MCF 10A (cell line): ENCODE measurements at regions of chr2 and their contacts with region 1.

Region 1: DNA sequence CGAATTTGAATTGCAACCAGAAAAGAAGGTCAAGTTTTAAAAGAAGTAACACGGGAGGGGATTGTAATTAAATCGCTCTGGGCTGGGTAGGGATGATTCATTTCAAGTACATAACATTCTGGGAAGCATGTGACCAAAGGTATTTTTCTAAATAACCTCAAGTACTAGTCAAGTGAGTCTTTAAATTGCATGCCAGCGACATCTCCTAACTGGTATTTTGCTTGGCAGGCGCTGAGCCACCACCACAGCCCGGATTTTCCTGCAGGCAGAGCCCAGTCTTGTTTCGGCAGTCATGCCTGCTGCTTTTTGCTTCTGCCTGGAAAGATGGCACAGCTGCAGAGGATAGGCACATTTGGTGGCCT is 33.7 kb upstream of the NPAS2 start:
- DNase-seq: peak; percentile 91
- H3K4me3 Mint-ChIP-seq: peak overlapping the region; percentile 56
- H3K27ac Mint-ChIP-seq: peak overlapping the region; percentile 21
- H3K4me1 Mint-ChIP-seq: peaks cover 29% of the 10 kb centered on the region
- H3K27me3 Mint-ChIP-seq: no peaks in the 10 kb centered on the region
- CTCF ChIP-seq: no peak

Region 2: DNA sequence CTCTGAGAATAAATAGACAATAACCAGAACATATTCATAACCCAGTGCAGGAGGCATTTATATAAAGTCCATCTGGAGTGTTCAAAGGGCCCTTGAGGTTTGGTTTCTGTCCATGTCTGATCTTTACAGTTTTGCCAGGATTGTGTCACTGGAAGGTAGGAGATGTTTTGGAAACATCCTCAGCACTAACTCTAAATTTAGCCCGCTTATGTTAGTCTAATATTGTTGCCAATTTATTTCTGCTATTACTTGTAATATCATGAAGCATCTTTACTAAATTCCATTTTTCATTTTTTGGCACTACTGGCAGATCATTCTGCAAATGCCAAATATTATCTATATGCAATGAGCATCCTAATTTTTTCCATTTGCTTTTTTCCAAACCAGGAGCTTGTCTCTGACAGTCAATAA is 1274.1 kb before region 1 on chr2:
- CTCF ChIA-PET with region 1: no interaction called
- POLR2A ChIA-PET with region 1: no interaction called
- intact Hi-C with region 1: loop called (anchors 10 kb)
- DNase-seq: no peak
- H3K4me3 Mint-ChIP-seq: no peak overlapping the region
- H3K27ac Mint-ChIP-seq: no peak overlapping the region
- H3K4me1 Mint-ChIP-seq: peaks cover 6% of the 10 kb centered on the region
- H3K27me3 Mint-ChIP-seq: no peaks in the 10 kb centered on the region
- CTCF ChIP-seq: no peak

Region 3: GRCh38 chr2:100721693-100722092 is 64.6 kb before region 1 on chr2:
- CTCF ChIA-PET with region 1: no interaction called
- POLR2A ChIA-PET with region 1: no interaction called
- intact Hi-C with region 1: no loop called
- DNase-seq: peak; percentile 40
- H3K4me3 Mint-ChIP-seq: no peak overlapping the region
- H3K27ac Mint-ChIP-seq: no peak overlapping the region
- H3K4me1 Mint-ChIP-seq: peaks cover 5% of the 10 kb centered on the region
- H3K27me3 Mint-ChIP-seq: no peaks in the 10 kb centered on the region
- CTCF ChIP-seq: no peak